Heart left ventricle (tissue), 16 donors: ENCODE measurements at regions of chr3 and their contacts with region 1.

Region 1: GRCh38 chr3:129058441-129059200 is 2.0 kb upstream of the GP9 start:
- DNase-seq: no peak
- ATAC-seq: peak in 2 of 4 donors; percentile 24 to 28
- H3K4me3 ChIP-seq: no peak overlapping the region
- H3K27ac ChIP-seq: no peak overlapping the region
- H3K4me1 ChIP-seq: peaks cover 0 to 20% (median 4%) of the 10 kb centered on the region in 12 donors
- H3K27me3 ChIP-seq: no peaks in the 10 kb centered on the region
- CTCF ChIP-seq: no peak
- POLR2A ChIP-seq: no peak

Region 2: GRCh38 chr3:129249276-129250065 is 190.8 kb after region 1 on chr3 and contains the start of gene COPG1:
- intact Hi-C with region 1: loop called in 9 of 10 experiments (anchors 1 to 10 kb)
- DNase-seq: peak; percentile 85 to 94 (median 87)
- ATAC-seq: peak; percentile 85 to 95 (median 94)
- H3K4me3 ChIP-seq: peak within 1 kb of the TSS; percentile 60 to 100 (median 96)
- H3K27ac ChIP-seq: peak within 1 kb of the TSS; percentile 72 to 97 (median 85)
- H3K4me1 ChIP-seq: peaks cover 0 to 53% (median 32%) of the 10 kb centered on the region in 12 donors
- H3K27me3 ChIP-seq: no peaks in the 10 kb centered on the region
- CTCF ChIP-seq: peak in 1 of 12 donors; percentile 14
- POLR2A ChIP-seq: peak; percentile 27 to 89
- total RNA-seq, gene COPG1: 78.6 to 121 (median 93.9) TPM